ENCODE measurements at regions of chr20 and their contacts with region 1.

Region 1: GRCh38 chr20:1041845-1042390 is 39.8 kb upstream of the RSPO4 start:
- DNase-seq: no peak
- H3K4me3 ChIP-seq: no peak overlapping the region
- H3K27ac ChIP-seq: no peak overlapping the region
- H3K4me1 ChIP-seq: no peaks in the 10 kb centered on the region
- H3K27me3 ChIP-seq: no peaks in the 10 kb centered on the region
- CTCF ChIP-seq: no peak

Region 2: DNA sequence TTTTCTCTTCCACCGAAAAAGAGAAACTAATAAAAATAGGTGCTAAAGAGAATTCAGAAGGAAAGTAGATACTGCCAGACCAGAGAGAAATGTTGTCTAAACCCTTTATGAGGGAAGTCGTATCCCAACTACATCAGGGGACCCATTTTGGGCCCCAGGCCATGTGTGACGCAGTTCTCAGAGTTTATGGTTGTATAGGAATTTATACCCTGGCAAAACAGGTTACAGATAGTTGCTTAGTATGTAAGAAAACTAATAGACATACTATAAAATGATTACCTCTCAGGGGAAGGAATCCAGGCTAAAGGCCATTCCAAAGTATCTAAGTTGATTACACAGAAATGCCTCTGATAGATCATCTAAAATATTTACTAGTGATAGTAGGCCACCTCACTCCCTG is 245.0 kb before region 1 on chr20:
- CTCF ChIA-PET with region 1: no interaction called
- dilution Hi-C with region 1: loop called (anchors 5 kb)
- in situ Hi-C with region 1: no loop called
- intact Hi-C with region 1: no loop called
- DNase-seq: no peak
- H3K4me3 ChIP-seq: no peak overlapping the region
- H3K27ac ChIP-seq: no peak overlapping the region
- H3K4me1 ChIP-seq: no peaks in the 10 kb centered on the region
- H3K27me3 ChIP-seq: peaks cover 4% of the 10 kb centered on the region
- CTCF ChIP-seq: no peak

Region 3: GRCh38 chr20:956330-956951 is 85.5 kb before region 1 on chr20:
- CTCF ChIA-PET with region 1: no interaction called
- dilution Hi-C with region 1: loop called (anchors 5 kb)
- in situ Hi-C with region 1: no loop called
- intact Hi-C with region 1: no loop called
- DNase-seq: peak; percentile 33
- H3K4me3 ChIP-seq: no peak overlapping the region
- H3K27ac ChIP-seq: no peak overlapping the region
- H3K4me1 ChIP-seq: no peaks in the 10 kb centered on the region
- H3K27me3 ChIP-seq: peaks cover 8% of the 10 kb centered on the region
- CTCF ChIP-seq: peak; percentile 97 to 99

Region 4: GRCh38 chr20:1010659-1011058 is 31.3 kb before region 1 on chr20:
- CTCF ChIA-PET with region 1: no interaction called
- dilution Hi-C with region 1: loop called (anchors 5 kb)
- in situ Hi-C with region 1: no loop called
- intact Hi-C with region 1: no loop called
- DNase-seq: no peak
- H3K4me3 ChIP-seq: no peak overlapping the region
- H3K27ac ChIP-seq: no peak overlapping the region
- H3K4me1 ChIP-seq: no peaks in the 10 kb centered on the region
- H3K27me3 ChIP-seq: no peaks in the 10 kb centered on the region
- CTCF ChIP-seq: no peak

Region 5: GRCh38 chr20:1177680-1178079 is 135.8 kb after region 1 on chr20:
- CTCF ChIA-PET with region 1: no interaction called
- dilution Hi-C with region 1: loop called (anchors 5 kb)
- in situ Hi-C with region 1: no loop called
- intact Hi-C with region 1: no loop called
- DNase-seq: no peak
- H3K4me3 ChIP-seq: no peak overlapping the region
- H3K27ac ChIP-seq: no peak overlapping the region
- H3K4me1 ChIP-seq: no peaks in the 10 kb centered on the region
- H3K27me3 ChIP-seq: no peaks in the 10 kb centered on the region
- CTCF ChIP-seq: peak in 1 of 2 donors; percentile 7

Measured in mammary epithelial cell (primary cell).